WTC11 (cell line): ENCODE measurements at regions of chr1 and their contacts with region 1.

Region 1: DNA sequence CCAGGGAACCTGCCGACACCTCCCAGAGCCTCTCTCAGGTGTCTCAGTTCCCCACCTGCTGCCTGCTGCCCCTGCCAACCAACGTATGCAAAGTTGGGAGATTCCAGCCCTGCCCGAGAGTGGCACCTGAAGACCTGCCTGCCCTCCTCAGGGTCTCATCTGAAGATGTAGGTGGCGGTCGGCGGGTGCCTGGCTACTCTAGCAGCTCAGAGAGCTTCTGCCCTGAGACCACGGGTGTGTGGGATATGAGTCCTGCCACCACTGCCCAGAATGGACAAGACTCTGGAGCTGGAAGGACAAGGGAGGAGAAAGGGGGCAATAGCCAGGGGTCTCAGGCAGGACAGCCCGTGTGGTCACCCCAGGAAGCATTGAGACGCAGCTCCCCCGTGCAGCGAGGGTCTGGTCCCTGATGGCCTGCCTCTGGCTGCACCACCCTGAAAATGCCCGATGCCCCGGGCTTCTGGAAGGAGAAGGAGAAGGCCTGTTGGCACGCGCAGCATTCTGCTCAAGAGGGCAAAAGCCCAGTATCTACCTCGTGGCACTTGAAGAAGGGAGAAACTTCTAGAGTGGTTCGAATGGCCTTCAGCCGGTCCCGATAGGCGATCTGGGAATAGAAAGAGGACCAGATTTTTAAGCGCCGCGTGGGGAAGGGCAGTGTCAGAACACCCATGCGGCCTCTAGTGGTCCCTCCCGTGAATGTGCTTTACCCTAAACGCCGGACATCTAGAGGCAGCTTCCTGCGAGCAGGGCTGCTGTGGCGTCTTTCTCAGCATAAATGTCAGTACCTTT is 88.8 kb downstream of the STUM start:
- DNase-seq: peak; percentile 33
- ATAC-seq: peak; percentile 33
- H3K4me3 Mint-ChIP-seq: no peak overlapping the region
- H3K27ac Mint-ChIP-seq: no peak overlapping the region
- H3K4me1 Mint-ChIP-seq: peaks cover 23% of the 10 kb centered on the region
- H3K27me3 Mint-ChIP-seq: no peaks in the 10 kb centered on the region
- CTCF ChIP-seq: no peak

Region 2: DNA sequence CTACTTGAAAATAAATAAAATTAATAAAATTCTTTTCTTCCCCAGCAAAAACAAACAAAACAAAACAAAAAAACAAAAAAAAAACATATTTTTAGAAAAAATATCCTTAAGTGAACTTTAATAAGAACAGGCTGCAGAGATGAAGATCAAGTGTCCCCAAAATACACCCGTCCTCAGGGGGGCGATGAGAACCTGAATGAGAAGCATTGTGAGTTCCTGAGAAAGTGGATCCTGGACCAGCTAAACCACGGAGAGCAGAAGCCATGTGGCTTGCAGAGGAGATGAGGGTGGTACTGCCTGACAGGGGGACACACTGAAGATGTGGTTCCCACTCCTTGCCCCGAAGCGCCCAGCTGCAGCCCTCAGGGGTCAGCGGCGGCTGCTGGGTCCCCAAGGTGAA is 12.4 kb after region 1 on chr1:
- CTCF ChIA-PET with region 1: interaction called, 12 read pairs
- POLR2A ChIA-PET with region 1: no interaction called
- DNase-seq: peak; percentile 40
- ATAC-seq: peak; percentile 15
- H3K4me3 Mint-ChIP-seq: no peak overlapping the region
- H3K27ac Mint-ChIP-seq: no peak overlapping the region
- H3K4me1 Mint-ChIP-seq: peaks cover 34% of the 10 kb centered on the region
- H3K27me3 Mint-ChIP-seq: no peaks in the 10 kb centered on the region
- CTCF ChIP-seq: no peak